Caco-2 (cell line): ENCODE measurements at regions of chr10 and their contacts with region 1.

Region 1: DNA sequence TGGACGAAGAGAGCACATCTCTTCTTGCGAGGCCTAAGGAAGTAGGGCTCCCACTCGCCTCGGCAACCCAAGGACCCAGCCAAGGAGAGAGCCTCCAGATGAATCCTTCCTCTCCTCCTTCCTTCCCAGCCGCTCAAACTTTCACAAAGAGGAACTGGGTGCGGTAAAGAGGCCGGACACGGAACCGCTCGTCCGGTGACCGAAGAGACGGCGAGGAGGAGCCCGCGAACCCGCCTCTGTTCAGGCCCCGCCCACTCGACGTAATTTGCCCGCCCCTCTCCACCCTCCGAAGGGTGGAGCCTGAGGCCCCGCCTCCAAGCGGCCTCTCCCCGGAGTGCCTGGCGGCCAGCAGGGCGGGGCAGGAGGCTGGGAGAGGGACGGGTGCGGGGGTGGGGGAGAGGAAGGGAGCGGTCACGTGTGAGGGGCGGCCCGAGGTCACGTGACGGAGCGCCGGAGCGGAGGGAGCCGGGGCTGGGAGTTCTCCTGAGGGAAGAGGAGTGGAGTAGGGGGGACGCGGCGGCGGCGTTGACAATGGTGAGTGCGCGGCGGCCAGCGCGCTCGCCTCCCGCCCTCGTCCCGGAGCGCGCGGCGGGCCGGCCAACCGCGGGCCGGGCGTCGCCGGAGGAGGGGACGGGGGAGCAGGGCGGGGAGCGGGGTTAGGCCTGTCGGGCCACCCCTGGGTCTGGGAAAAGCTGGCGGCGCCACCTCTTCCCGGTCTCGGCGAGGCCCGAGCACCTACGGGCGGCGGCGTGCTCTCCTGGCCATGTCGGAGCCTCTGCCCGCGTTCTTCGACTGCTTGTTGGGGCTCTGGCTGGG is at the start of gene VPS26A:
- DNase-seq: peak; percentile 100
- H3K4me3 ChIP-seq: peak within 1 kb of the TSS; percentile 95
- H3K4me3 Mint-ChIP-seq: peak within 1 kb of the TSS; percentile 97
- H3K27ac Mint-ChIP-seq: peak within 1 kb of the TSS; percentile 97
- H3K4me1 ChIP-seq: peaks cover 9% of the 10 kb centered on the region; the same call in 1 of the 2 replicates
- H3K4me1 Mint-ChIP-seq: no peaks in the 10 kb centered on the region
- H3K27me3 ChIP-seq: no peaks in the 10 kb centered on the region
- H3K27me3 Mint-ChIP-seq: no peaks in the 10 kb centered on the region
- CTCF ChIP-seq: no peak
- total RNA-seq, gene VPS26A: 133 and 143 TPM in 2 replicates

Region 2: GRCh38 chr10:68955832-68956532 is 168.0 kb before region 1 on chr10 and contains the start of gene DDX21:
- CTCF ChIA-PET with region 1: no interaction called
- POLR2A ChIA-PET with region 1: interaction called, 6 read pairs
- intact Hi-C with region 1: loop called (anchors 1 kb)
- DNase-seq: peak; percentile 96 to 97
- H3K4me3 ChIP-seq: peak within 1 kb of the TSS; percentile 95
- H3K4me3 Mint-ChIP-seq: peak within 1 kb of the TSS; percentile 92
- H3K27ac Mint-ChIP-seq: peak within 1 kb of the TSS; percentile 97
- H3K4me1 ChIP-seq: peaks cover 11% of the 10 kb centered on the region
- H3K4me1 Mint-ChIP-seq: no peaks in the 10 kb centered on the region
- H3K27me3 ChIP-seq: no peaks in the 10 kb centered on the region
- H3K27me3 Mint-ChIP-seq: no peaks in the 10 kb centered on the region
- CTCF ChIP-seq: peak; percentile 88 to 96
- total RNA-seq, gene DDX21: 239 and 243 TPM in 2 replicates

Region 3: DNA sequence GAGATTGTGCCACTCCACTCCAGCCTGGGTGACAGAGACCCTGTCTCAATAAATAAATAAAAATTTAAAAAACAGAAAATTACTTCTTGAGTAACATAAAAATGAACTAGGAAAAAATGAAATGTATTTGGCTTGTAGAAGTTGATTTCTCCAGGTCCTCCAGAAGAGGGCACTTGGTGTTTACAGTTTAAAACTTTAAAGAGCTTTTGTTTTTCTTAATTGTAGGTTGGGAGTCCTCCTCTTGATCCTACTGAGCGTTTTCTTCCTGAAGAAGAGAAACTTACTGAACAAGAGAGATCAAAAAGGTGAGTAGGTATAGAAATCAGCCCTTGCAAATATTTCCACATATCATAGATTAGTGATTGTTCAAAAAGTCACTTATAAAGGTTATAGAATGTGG is 119.1 kb before region 1 on chr10:
- CTCF ChIA-PET with region 1: interaction called, 3 read pairs
- POLR2A ChIA-PET with region 1: no interaction called
- intact Hi-C with region 1: loop called (anchors 1 kb)
- DNase-seq: no peak
- H3K4me3 ChIP-seq: no peak overlapping the region
- H3K4me3 Mint-ChIP-seq: no peak overlapping the region
- H3K27ac Mint-ChIP-seq: no peak overlapping the region
- H3K4me1 ChIP-seq: no peaks in the 10 kb centered on the region
- H3K4me1 Mint-ChIP-seq: no peaks in the 10 kb centered on the region
- H3K27me3 ChIP-seq: no peaks in the 10 kb centered on the region
- H3K27me3 Mint-ChIP-seq: no peaks in the 10 kb centered on the region
- CTCF ChIP-seq: peak; percentile 64 to 75

Region 4: DNA sequence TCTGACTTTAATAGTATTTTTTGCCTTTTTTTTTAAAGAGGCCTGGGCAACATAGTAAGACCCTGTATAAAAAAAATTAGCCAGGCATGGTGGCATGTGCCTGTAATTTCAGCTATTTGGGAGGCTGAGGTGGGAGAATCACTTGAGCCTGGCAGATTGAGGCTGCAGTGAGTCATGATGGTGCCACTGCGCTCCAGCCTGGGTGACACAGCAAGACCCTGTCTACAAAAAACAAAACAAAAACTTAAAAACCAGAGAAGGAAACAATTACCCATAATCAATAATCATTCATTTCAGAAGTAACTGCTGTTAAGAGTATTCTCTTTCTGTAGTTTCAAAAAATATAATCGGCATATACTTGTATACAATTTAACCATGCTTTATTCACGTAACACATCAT is 28.0 kb after region 1 on chr10:
- CTCF ChIA-PET with region 1: no interaction called
- POLR2A ChIA-PET with region 1: no interaction called
- intact Hi-C with region 1: no loop called
- DNase-seq: no peak
- H3K4me3 ChIP-seq: no peak overlapping the region
- H3K4me3 Mint-ChIP-seq: no peak overlapping the region
- H3K27ac Mint-ChIP-seq: no peak overlapping the region
- H3K4me1 ChIP-seq: peaks cover 4% of the 10 kb centered on the region; the same call in 1 of the 2 replicates
- H3K4me1 Mint-ChIP-seq: no peaks in the 10 kb centered on the region
- H3K27me3 ChIP-seq: no peaks in the 10 kb centered on the region
- H3K27me3 Mint-ChIP-seq: no peaks in the 10 kb centered on the region
- CTCF ChIP-seq: no peak

Region 5: DNA sequence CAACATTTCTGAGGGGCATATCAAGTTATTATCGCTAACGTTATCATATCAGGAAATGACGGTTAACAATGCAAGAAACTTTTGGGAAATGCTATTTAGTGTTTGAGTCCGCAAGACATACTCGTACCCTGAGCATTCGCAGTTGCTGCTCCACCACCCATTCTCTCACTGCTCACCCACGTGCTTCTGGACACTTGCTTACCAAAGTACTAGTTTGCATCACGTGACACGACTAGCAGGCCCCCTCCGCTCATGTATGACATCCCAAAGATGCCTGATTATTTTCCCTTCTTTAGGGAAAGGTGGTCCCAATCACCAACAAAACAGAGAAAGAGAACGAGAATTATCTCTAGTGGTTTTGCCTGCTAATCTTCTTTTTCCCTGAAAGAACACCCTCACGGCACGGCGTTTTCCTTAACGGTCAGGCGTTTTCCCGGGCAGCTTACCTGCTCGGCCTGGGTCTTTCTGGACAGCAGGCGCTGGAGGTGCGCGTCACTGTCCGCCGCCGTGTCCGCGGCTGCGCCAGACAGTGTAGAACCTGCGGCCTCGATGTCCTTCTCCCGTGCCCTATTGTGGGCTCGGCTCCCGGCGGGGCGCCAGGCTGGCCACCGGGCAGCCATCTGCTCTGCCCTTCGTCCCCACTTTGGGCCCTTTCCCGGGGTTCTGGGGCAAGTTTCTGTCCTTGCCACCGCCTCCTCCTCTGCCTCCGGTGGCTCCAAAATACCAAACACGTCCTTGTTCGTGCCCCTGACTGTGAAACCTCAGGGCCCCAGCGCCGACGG is 56.0 kb after region 1 on chr10 and contains the start of gene SUPV3L1:
- CTCF ChIA-PET with region 1: no interaction called
- POLR2A ChIA-PET with region 1: interaction called, 5 read pairs
- intact Hi-C with region 1: loop called (anchors 1 kb)
- DNase-seq: peak; percentile 97 to 99
- H3K4me3 ChIP-seq: peak within 1 kb of the TSS; percentile 94
- H3K4me3 Mint-ChIP-seq: peak within 1 kb of the TSS; percentile 79
- H3K27ac Mint-ChIP-seq: peak within 1 kb of the TSS; percentile 100
- H3K4me1 ChIP-seq: no peaks in the 10 kb centered on the region
- H3K4me1 Mint-ChIP-seq: peaks cover 15% of the 10 kb centered on the region
- H3K27me3 ChIP-seq: no peaks in the 10 kb centered on the region
- H3K27me3 Mint-ChIP-seq: no peaks in the 10 kb centered on the region
- CTCF ChIP-seq: no peak
- total RNA-seq, gene SUPV3L1: 77.1 and 79.2 TPM in 2 replicates

Region 6: GRCh38 chr10:69318106-69318866 is 194.3 kb after region 1 on chr10:
- CTCF ChIA-PET with region 1: no interaction called
- POLR2A ChIA-PET with region 1: no interaction called
- intact Hi-C with region 1: loop called (anchors 10 kb)
- DNase-seq: peak; percentile 92 to 98
- H3K4me3 ChIP-seq: peak overlapping the region; percentile 64
- H3K4me3 Mint-ChIP-seq: peak overlapping the region; percentile 87
- H3K27ac Mint-ChIP-seq: peak overlapping the region; percentile 53
- H3K4me1 ChIP-seq: peaks cover 48% of the 10 kb centered on the region
- H3K4me1 Mint-ChIP-seq: peaks cover 25% of the 10 kb centered on the region
- H3K27me3 ChIP-seq: no peaks in the 10 kb centered on the region
- H3K27me3 Mint-ChIP-seq: no peaks in the 10 kb centered on the region
- CTCF ChIP-seq: no peak